PC-9 (cell line): ENCODE measurements at regions of chr4 and their contacts with region 1.

Region 1: DNA sequence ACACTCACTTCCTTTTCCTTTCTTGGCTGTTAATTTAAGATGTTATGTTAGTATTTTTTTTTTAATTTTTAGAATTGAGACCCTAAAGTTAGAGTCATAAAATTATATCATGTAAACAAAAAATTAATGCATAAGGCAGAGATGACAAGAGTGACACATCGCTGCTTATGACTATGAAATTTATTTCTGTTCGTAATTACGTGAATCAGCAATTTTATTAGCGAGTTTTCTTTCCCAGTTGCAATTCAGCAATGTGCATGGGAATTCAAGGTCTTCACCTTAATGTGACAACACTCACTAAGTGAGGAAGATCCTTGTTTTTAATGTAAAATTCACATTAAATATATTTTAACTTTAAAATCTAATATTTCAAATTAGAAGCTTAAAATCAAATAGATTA is 181.2 kb upstream of the SPOCK3 start:
- DNase-seq: no peak
- H3K4me3 ChIP-seq: no peak overlapping the region
- H3K27ac ChIP-seq: no peak overlapping the region
- H3K4me1 ChIP-seq: no peaks in the 10 kb centered on the region
- H3K27me3 ChIP-seq: no peaks in the 10 kb centered on the region
- CTCF ChIP-seq: no peak

Region 2: GRCh38 chr4:167000141-167000852 is 415.2 kb before region 1 on chr4:
- CTCF ChIA-PET with region 1: no interaction called
- POLR2A ChIA-PET with region 1: no interaction called
- intact Hi-C with region 1: no loop called
- DNase-seq: peak in 1 of 2 experiments; percentile 61
- H3K4me3 ChIP-seq: no peak overlapping the region
- H3K27ac ChIP-seq: no peak overlapping the region
- H3K4me1 ChIP-seq: peaks cover 6% of the 10 kb centered on the region; the same call in 1 of the 2 replicates
- H3K27me3 ChIP-seq: no peaks in the 10 kb centered on the region
- CTCF ChIP-seq: no peak

Region 3: GRCh38 chr4:167234316-167234881 is 181.1 kb before region 1 on chr4 and contains the start of gene SPOCK3:
- CTCF ChIA-PET with region 1: no interaction called
- POLR2A ChIA-PET with region 1: interaction called, 19 read pairs
- intact Hi-C with region 1: no loop called
- DNase-seq: peak in 1 of 2 experiments; percentile 51
- H3K4me3 ChIP-seq: peak within 1 kb of the TSS; percentile 66
- H3K27ac ChIP-seq: no peak within 1 kb of the TSS
- H3K4me1 ChIP-seq: no peaks in the 10 kb centered on the region
- H3K27me3 ChIP-seq: no peaks in the 10 kb centered on the region
- CTCF ChIP-seq: no peak
- total RNA-seq, gene SPOCK3: not detected in 2 replicates

Region 4: DNA sequence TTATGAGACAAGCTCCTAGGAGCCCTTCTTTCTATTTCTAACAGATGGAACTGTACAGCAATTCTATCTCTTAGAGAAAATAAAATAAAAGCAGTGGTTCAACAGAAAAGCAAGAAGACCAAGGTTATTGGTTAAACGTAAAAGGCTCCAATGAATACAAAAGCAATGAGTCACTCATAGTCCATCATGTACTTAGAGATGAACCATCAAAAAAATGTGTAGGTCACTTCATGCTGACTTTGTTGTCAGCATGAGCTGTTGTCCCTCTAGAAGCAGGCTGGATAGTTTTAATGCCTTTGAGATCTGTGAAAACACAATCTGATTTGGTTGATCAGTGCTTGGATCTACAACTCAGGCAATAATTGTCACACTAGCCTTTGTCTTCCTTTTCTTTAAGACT is 298.3 kb after region 1 on chr4:
- CTCF ChIA-PET with region 1: no interaction called
- POLR2A ChIA-PET with region 1: no interaction called
- intact Hi-C with region 1: no loop called
- DNase-seq: no peak
- H3K4me3 ChIP-seq: no peak overlapping the region
- H3K27ac ChIP-seq: no peak overlapping the region
- H3K4me1 ChIP-seq: no peaks in the 10 kb centered on the region
- H3K27me3 ChIP-seq: no peaks in the 10 kb centered on the region
- CTCF ChIP-seq: no peak